Calu3 (cell line): ENCODE measurements at regions of chr10 and their contacts with region 1.

Region 1: DNA sequence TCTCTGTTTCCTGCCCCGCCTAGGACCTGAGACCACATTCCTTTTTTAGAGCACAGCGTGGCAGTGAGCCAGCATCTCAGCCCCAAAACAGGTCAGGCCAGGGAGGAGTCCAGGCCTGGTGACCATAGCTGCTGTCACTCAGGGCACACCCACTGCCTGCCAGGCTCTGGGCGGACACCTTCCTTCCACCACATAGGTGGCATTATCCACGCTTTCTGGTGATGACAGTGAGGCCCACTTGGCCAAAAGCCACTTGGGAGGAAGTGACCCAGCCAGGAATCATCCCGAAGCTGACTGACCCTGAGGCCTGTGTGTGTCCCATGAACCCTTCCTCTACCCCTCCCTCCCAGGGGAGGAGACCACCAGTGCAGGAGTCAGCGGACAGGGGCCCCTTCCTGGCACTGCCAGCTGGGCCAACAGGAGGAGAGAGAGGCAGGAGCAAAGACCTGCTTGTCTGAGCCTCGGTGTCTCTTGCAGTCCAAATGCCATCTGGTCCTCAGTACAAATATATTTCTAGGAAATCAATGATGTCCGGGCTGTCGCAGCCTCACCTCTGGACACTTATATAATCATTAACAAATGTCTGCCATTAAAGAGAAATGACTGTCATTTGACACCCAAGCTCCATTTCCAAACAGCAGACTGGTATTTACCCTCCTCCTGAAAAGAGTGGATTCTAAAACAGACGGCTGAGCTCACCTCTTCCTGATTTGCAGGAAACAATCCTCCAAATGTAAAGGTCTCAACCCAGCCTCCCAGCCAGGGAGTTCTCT is 63.0 kb downstream of the ABRAXAS2 start:
- DNase-seq: peak; percentile 85
- H3K4me3 Mint-ChIP-seq: peak overlapping the region; percentile 41
- H3K27ac Mint-ChIP-seq: peak overlapping the region; percentile 74
- H3K4me1 Mint-ChIP-seq: no peaks in the 10 kb centered on the region
- H3K27me3 Mint-ChIP-seq: no peaks in the 10 kb centered on the region
- CTCF ChIP-seq: no peak

Region 2: GRCh38 chr10:124791378-124792348 is 72.9 kb before region 1 on chr10 and contains the start of gene EEF1AKMT2:
- CTCF ChIA-PET with region 1: no interaction called
- intact Hi-C with region 1: loop called (anchors 2 kb)
- DNase-seq: peak; percentile 85
- H3K4me3 Mint-ChIP-seq: peak within 1 kb of the TSS; percentile 99
- H3K27ac Mint-ChIP-seq: peak within 1 kb of the TSS; percentile 37
- H3K4me1 Mint-ChIP-seq: peaks cover 6% of the 10 kb centered on the region
- H3K27me3 Mint-ChIP-seq: peaks cover 10% of the 10 kb centered on the region
- CTCF ChIP-seq: no peak
- total RNA-seq, gene EEF1AKMT2: 13.0 and 13.2 TPM in 2 replicates